ENCODE measurements at regions of chr7 and their contacts with region 1.

Region 1: DNA sequence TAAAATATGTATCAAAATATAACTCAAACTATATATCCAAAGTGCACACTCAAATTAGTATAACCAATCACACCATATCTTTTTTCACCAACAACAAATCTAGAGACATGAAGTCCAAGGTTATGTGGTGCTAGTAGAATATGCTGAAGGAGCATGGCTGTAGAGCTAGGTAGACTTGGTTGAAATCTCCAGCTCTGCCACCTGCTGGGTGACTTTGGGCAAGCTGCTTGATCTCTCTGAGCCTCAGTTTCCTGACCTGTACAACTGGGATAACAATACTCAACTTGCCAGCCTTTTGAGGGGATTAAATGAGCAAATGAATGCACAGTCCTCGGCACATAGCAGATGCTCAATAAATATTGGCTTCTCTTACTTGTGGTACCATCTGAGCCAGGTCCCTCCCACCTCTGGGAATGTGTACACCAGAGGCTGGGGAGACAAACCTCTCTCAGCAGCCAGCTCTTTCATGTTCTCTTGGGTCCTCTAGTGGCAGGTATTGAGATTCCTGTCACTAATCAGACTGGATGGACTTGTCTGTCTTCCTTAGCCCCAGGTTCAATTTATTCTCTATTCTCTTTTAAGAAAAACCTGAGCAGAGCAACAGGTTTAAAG is 94.2 kb upstream of the PDE1C start:
- DNase-seq: peak; percentile 43
- ATAC-seq: peak; percentile 90
- H3K4me3 ChIP-seq: no peak overlapping the region
- H3K27ac ChIP-seq: no peak overlapping the region
- H3K4me1 ChIP-seq: no peaks in the 10 kb centered on the region
- H3K27me3 ChIP-seq: no peaks in the 10 kb centered on the region; a peak in 1 of 5 replicates
- CTCF ChIP-seq: peak; percentile 58
- EP300 ChIP-seq: no peak
- POLR2A ChIP-seq: no peak
- RAD21 ChIP-seq: no peak

Region 2: GRCh38 chr7:31782411-31782991 is 382.0 kb before region 1 on chr7:
- CTCF ChIA-PET with region 1: no interaction called
- POLR2A ChIA-PET with region 1: no interaction called
- in situ Hi-C with region 1: no loop called
- intact Hi-C with region 1: loop called (anchors 1 kb)
- DNase-seq: peak; percentile 47
- ATAC-seq: peak; percentile 93
- H3K4me3 ChIP-seq: no peak overlapping the region
- H3K27ac ChIP-seq: no peak overlapping the region
- H3K4me1 ChIP-seq: no peaks in the 10 kb centered on the region
- H3K27me3 ChIP-seq: 0 out of 5 replicates have a peak, but pooled peaks cover 0 to 4% of the 10 kb centered on the region in 2 experiments
- CTCF ChIP-seq: peak; percentile 64
- EP300 ChIP-seq: no peak
- POLR2A ChIP-seq: no peak
- RAD21 ChIP-seq: no peak

Region 3: GRCh38 chr7:32142649-32143048 is 21.8 kb before region 1 on chr7:
- CTCF ChIA-PET with region 1: no interaction called
- POLR2A ChIA-PET with region 1: no interaction called
- in situ Hi-C with region 1: no loop called
- intact Hi-C with region 1: no loop called
- DNase-seq: no peak
- ATAC-seq: no peak
- H3K4me3 ChIP-seq: no peak overlapping the region
- H3K27ac ChIP-seq: no peak overlapping the region
- H3K4me1 ChIP-seq: no peaks in the 10 kb centered on the region
- H3K27me3 ChIP-seq: no peaks in the 10 kb centered on the region
- CTCF ChIP-seq: no peak
- EP300 ChIP-seq: no peak
- POLR2A ChIP-seq: no peak
- RAD21 ChIP-seq: no peak